Activated naive CD4-positive, alpha-beta T cell treated with anti-CD3 and anti-CD28 coated beads for 36 hours (primary cell): ENCODE measurements at regions of chr6 and their contacts with region 1.

Region 1: DNA sequence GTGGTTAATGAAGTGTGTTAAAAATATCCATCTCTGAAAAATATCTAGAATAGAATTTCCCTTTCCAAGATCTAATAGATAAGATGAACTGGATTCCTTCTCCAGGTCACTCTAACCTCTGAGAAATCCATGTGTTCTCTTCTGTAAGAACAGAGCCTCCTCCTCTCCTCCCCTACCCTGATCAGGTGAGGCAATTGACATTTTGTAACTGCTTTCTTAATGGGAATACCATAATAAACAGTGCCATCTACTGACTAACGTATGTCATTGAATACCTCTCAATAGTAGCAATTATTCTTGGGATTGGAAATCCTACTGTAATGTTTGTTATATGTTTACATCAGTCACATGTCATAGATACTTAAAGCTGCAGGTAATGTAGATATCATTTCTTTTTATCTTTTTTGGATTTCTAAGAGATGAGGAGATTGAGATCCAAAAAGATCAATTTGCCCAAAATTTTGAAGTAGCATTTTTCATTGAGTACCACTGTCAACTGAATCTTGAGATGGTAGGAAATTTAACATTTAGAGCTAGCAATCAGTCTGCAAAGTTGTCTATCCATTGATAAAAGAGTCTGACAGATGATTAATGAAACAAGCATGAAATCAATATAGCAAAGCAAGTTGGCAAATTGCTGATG is 365.8 kb upstream of the HSF2 start:
- DNase-seq: no peak
- H3K4me3 Mint-ChIP-seq: no peak overlapping the region
- H3K27ac Mint-ChIP-seq: no peak overlapping the region
- H3K4me1 Mint-ChIP-seq: peaks cover 4% of the 10 kb centered on the region
- H3K27me3 Mint-ChIP-seq: peaks cover 3% of the 10 kb centered on the region

Region 2: GRCh38 chr6:121319112-121319553 is 714.5 kb before region 1 on chr6:
- CTCF ChIA-PET with region 1: no interaction called
- intact Hi-C with region 1: loop called (anchors 2 kb)
- DNase-seq: no peak
- H3K4me3 Mint-ChIP-seq: no peak overlapping the region
- H3K27ac Mint-ChIP-seq: no peak overlapping the region
- H3K4me1 Mint-ChIP-seq: peaks cover 22% of the 10 kb centered on the region
- H3K27me3 Mint-ChIP-seq: no peaks in the 10 kb centered on the region

Region 3: GRCh38 chr6:121334299-121335086 is 699.2 kb before region 1 on chr6 and contains the start of gene TBC1D32:
- CTCF ChIA-PET with region 1: no interaction called
- intact Hi-C with region 1: loop called (anchors 5 kb)
- DNase-seq: peak; percentile 87
- H3K4me3 Mint-ChIP-seq: peak within 1 kb of the TSS; percentile 98
- H3K27ac Mint-ChIP-seq: peak within 1 kb of the TSS; percentile 97
- H3K4me1 Mint-ChIP-seq: peaks cover 38% of the 10 kb centered on the region
- H3K27me3 Mint-ChIP-seq: no peaks in the 10 kb centered on the region
- total RNA-seq, gene TBC1D32: 6.9 to 8.2 TPM

Region 4: DNA sequence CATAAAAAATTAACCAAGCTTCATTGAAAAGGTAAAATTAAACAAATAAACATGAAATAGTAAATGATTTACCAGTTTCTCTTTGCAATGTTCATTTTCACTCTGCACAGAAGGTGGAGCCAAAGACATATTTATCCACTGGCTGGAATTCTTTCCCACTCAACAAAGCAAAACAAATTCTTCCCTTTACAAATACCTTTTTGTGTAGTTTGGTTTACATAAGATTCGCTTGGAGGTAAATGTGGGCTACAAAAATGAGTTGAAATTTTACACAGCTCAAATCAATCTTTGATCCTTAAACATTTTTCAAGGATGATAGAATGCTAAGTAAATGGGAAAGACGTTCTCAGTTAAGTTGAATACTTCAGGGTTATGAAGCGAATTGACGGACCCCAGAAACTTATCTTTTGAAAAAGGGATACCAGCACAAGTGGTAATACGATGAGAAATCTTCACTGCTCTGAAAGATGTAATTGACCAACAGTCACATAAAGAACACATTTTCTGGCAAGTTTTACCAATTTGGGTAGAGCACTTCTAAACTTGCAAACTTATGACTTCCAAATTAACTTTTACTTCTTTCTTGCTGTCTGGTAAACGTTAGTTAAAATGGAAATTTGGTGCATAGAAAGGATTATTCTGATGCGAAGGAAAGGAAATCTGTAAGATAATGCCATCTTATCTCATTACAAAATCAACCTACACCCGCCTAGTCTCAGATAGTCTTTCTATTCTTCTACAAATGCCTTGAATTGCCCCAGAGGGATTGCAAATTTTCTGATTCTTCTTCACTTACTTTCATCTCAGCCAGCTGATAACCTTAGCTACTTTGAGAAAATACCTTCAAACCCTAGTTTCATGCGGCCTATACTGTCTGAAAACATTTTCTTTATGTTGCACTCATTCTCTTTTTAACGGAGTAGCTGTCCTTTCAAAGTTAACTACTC is 602.9 kb before region 1 on chr6:
- CTCF ChIA-PET with region 1: interaction called, 7 read pairs
- intact Hi-C with region 1: loop called (anchors 1 kb)
- DNase-seq: no peak
- H3K4me3 Mint-ChIP-seq: no peak overlapping the region
- H3K27ac Mint-ChIP-seq: no peak overlapping the region
- H3K4me1 Mint-ChIP-seq: peaks cover 3% of the 10 kb centered on the region
- H3K27me3 Mint-ChIP-seq: no peaks in the 10 kb centered on the region

Region 5: DNA sequence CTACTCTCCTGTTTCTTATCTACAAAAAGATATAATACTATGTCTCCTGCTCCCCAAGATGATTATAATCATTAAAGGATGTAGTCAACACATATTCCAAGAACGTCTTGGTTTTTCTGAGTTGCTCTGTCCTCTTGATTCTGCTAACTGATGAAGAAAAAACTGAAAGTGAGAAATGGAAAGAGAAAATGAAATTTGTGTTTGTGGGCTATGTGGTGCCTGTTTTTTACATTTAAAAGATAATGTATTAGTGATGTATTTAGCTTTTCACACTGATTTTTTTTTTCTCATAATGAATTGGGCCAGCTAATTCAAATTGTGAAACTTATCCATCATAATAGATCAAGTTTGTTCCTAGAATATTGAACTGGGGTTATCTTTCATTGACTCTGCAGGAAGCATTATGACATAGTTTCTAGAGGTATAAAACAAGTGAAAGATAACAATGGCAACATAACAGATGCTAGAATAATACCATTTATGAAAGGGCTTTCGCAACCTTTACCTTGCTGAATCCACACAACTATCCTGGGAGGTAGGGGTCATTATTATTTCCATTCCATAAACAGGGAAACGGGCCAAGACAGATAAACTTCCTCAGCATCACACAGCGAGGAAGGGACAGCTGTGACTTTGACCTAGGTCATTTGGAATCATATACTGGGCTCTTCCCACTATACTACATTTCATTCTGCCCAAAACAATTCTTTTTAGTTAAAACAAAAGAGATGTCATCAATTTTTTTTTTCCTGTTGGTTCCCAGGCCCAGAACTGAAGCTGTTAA is 261.5 kb before region 1 on chr6:
- CTCF ChIA-PET with region 1: interaction called, 3 read pairs
- intact Hi-C with region 1: loop called (anchors 10 kb)
- DNase-seq: no peak
- H3K4me3 Mint-ChIP-seq: no peak overlapping the region
- H3K27ac Mint-ChIP-seq: no peak overlapping the region
- H3K4me1 Mint-ChIP-seq: peaks cover 16% of the 10 kb centered on the region
- H3K27me3 Mint-ChIP-seq: peaks cover 2% of the 10 kb centered on the region

Region 6: DNA sequence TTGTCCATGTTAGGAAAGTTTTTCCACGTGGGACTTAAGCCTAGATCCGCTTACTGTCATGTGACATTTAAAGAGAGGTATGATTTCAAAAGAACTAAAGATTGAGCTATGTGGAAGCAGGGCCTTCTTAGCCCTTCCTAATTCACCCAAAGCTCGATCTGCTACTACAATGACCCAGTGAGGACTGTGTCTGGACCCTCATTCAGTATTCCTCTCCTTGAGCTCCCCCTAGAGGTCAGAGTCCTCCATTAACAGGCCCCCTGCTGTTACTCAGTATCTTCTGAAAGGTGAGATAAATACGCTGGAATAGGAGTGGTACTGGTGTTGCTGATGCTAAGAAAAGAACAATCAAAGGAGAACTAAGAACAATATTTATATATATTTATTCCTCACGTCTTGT is 184.2 kb before region 1 on chr6:
- CTCF ChIA-PET with region 1: interaction called, 3 read pairs
- intact Hi-C with region 1: loop called (anchors 5 kb)
- DNase-seq: peak; percentile 54
- H3K4me3 Mint-ChIP-seq: no peak overlapping the region
- H3K27ac Mint-ChIP-seq: no peak overlapping the region
- H3K4me1 Mint-ChIP-seq: peaks cover 7% of the 10 kb centered on the region
- H3K27me3 Mint-ChIP-seq: peaks cover 5% of the 10 kb centered on the region

Region 7: GRCh38 chr6:122530440-122531046 is 496.9 kb after region 1 on chr6:
- CTCF ChIA-PET with region 1: no interaction called
- intact Hi-C with region 1: loop called (anchors 10 kb)
- DNase-seq: peak; percentile 67
- H3K4me3 Mint-ChIP-seq: no peak overlapping the region
- H3K27ac Mint-ChIP-seq: no peak overlapping the region
- H3K4me1 Mint-ChIP-seq: no peaks in the 10 kb centered on the region
- H3K27me3 Mint-ChIP-seq: peaks cover 22% of the 10 kb centered on the region